ENCODE measurements at regions of chr19 and their contacts with region 1.

Region 1: GRCh38 chr19:6372594-6373095 is at the start of gene ALKBH7:
- DNase-seq: peak; percentile 98 to 100
- H3K4me3 ChIP-seq: peak within 1 kb of the TSS; percentile 75 to 88
- H3K27ac ChIP-seq: peak within 1 kb of the TSS; percentile 93 to 99
- H3K4me1 ChIP-seq: peaks cover 3 to 5% of the 10 kb centered on the region in 2 donors
- H3K27me3 ChIP-seq: no peaks in the 10 kb centered on the region
- CTCF ChIP-seq: no peak
- total RNA-seq, gene ALKBH7: 68.8 TPM

Region 2: GRCh38 chr19:5904352-5905113 is 468.1 kb before region 1 on chr19 and contains the start of gene VMAC:
- intact Hi-C with region 1: loop called (anchors 5 kb)
- DNase-seq: peak; percentile 100
- H3K4me3 ChIP-seq: peak within 1 kb of the TSS; percentile 98 to 99
- H3K27ac ChIP-seq: peak within 1 kb of the TSS; percentile 63 to 93
- H3K4me1 ChIP-seq: peaks cover 5 to 25% of the 10 kb centered on the region in 2 donors
- H3K27me3 ChIP-seq: no peaks in the 10 kb centered on the region
- CTCF ChIP-seq: no peak
- total RNA-seq, gene VMAC: 15.2 TPM

Region 3: GRCh38 chr19:6199240-6199983 is 173.2 kb before region 1 on chr19:
- intact Hi-C with region 1: loop called (anchors 5 kb)
- DNase-seq: peak; percentile 95 to 99
- H3K4me3 ChIP-seq: peak overlapping the region; percentile 70 to 78
- H3K27ac ChIP-seq: no peak overlapping the region
- H3K4me1 ChIP-seq: peaks cover 0 to 9% of the 10 kb centered on the region in 2 donors
- H3K27me3 ChIP-seq: no peaks in the 10 kb centered on the region
- CTCF ChIP-seq: peak in 2 of 3 experiments; percentile 38 to 68

Region 4: DNA sequence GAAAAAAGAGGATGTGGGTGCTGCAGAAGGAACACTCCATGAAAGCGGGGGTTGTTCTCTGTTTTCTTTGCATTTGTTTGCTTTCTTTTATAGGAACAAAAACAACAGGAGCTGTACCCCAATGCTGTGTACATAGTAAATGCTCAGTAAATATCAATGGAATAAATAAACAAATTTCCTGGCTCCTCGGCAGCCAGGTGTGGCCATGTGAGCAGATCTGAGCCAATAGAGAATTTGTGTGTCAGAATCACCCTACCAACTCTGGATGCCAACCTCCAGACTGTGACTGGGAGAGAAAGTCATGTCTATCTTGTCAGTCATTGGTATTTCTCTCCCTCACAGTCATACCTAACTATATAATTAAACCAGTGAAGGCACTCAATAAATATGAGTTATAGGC is 22.0 kb before region 1 on chr19:
- intact Hi-C with region 1: no loop called
- DNase-seq: no peak
- H3K4me3 ChIP-seq: no peak overlapping the region
- H3K27ac ChIP-seq: no peak overlapping the region
- H3K4me1 ChIP-seq: no peaks in the 10 kb centered on the region
- H3K27me3 ChIP-seq: no peaks in the 10 kb centered on the region
- CTCF ChIP-seq: no peak

Region 5: DNA sequence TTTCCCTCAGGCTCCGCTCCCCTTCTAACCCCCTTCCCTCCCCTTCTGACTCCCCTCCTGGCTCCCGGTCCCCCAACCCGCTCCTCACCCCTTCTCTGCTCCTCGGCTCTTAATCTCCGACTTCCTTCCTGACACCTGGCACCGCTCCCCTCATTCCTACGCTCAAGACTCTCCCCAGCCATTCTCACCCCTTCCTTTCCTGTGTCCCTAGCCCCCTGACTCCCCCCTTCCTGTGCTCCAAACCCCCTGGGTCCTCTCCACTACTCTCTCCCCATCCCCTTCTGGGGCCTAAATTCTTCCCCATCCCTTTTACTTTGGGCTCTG is 10.7 kb before region 1 on chr19:
- intact Hi-C with region 1: loop called (anchors 1 kb)
- DNase-seq: no peak
- H3K4me3 ChIP-seq: peak overlapping the region; percentile 68 to 99
- H3K27ac ChIP-seq: peak overlapping the region; percentile 80 to 91
- H3K4me1 ChIP-seq: peaks cover 4 to 7% of the 10 kb centered on the region in 2 donors
- H3K27me3 ChIP-seq: no peaks in the 10 kb centered on the region
- CTCF ChIP-seq: no peak

Region 6: GRCh38 chr19:6424939-6425731 is 52.5 kb after region 1 on chr19:
- intact Hi-C with region 1: loop called (anchors 1 kb)
- DNase-seq: peak; percentile 100
- H3K4me3 ChIP-seq: peak overlapping the region; percentile 21 to 48
- H3K27ac ChIP-seq: peak overlapping the region; percentile 83 to 87
- H3K4me1 ChIP-seq: peaks cover 13 to 21% of the 10 kb centered on the region in 2 donors
- H3K27me3 ChIP-seq: no peaks in the 10 kb centered on the region
- CTCF ChIP-seq: peak in 1 of 3 experiments; percentile 17

Region 7: DNA sequence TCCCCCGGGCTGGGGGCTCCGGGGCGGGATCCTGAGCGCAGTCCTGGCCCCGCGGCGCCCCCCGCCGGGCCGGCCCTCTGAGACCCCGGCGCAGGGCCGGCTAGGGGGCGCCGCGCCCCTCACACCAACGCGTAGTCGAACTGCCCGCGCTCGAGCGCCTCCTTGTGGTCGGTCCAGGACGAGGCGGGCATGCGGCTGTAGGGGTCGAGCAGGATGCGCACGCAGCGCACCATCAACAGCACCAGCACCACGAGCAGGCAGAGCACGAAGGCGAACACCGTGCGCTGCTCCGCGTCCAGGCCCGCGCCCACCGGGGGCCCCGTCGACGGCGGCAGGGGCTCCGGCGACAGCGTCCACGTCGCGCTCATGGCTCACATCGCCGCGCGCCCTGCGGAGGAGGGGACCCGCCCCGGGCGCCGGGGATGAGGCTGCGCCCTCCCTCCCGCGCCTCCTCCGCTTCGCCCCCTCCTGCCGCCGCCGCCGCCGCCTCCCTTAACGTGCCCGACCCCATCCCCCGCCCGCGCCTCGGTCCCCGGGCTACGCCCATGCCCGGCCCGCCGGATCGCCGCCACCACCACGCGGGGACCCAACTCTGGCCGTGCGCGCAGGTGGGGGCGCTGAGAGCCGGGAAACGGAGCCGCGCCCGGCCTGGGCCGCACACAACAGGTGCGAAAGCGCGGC is 1552.7 kb after region 1 on chr19:
- intact Hi-C with region 1: loop called (anchors 5 kb)
- DNase-seq: peak in 1 of 2 donors; percentile 84
- H3K4me3 ChIP-seq: peak overlapping the region; percentile 69 to 73
- H3K27ac ChIP-seq: no peak overlapping the region
- H3K4me1 ChIP-seq: peaks cover 32 to 63% of the 10 kb centered on the region in 2 donors
- H3K27me3 ChIP-seq: no peaks in the 10 kb centered on the region
- CTCF ChIP-seq: peak; percentile 67 to 79 (median 69)